ENCODE measurements at regions of chr11 and their contacts with region 1.

Region 1: DNA sequence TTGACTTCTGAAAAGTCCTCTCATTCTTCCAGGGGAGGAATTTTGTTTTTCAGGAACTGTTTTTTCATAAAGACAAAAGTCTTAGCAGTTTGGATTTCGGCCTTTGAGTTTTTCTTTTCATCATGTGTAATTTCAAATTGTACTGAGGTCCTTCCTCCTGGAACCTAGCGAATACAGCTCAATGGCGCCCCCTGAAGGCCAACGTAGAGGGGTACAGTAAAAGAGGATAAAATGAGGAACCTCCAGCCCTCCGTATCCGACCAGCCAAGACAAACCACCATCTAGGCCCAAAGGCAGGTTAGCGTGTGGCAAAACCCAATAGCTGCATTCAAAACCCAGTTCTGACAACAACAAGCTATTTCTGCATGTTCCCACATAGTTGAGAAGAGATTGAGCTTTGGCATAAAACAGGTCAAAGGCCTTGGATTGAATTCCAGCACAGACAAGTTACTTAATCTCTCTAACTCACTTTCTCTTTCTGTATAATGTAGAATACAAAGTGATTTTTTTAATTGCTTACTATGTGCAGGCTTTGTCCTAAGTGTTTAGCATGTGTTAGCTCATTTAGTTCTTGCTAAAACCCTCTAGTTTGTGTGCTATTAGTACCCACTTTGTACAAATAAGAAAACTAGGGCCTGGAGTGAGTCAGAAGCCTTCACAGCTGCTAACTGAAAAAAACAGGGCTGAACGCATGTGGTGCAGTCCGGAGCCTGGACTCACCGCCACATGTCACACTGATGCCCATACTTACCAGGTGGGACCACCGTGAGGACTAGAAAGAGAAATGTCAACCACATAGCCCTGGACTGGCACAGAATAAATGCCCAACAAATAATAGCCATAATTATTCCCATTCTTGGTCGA is 43.2 kb upstream of the ETS1 start:
- DNase-seq: peak; percentile 84 to 88 (median 86)
- H3K4me3 ChIP-seq: no peak overlapping the region
- H3K4me3 Mint-ChIP-seq: peak overlapping the region in 7 of 8 donors; percentile 45 to 88 (median 75)
- H3K27ac ChIP-seq: peak overlapping the region; percentile 49
- H3K27ac Mint-ChIP-seq: peak overlapping the region; percentile 92 to 97 (median 93)
- H3K4me1 ChIP-seq: peaks cover 64% of the 10 kb centered on the region
- H3K4me1 Mint-ChIP-seq: peaks cover 49 to 68% (median 59%) of the 10 kb centered on the region in 4 donors
- H3K27me3 ChIP-seq: no peaks in the 10 kb centered on the region
- H3K27me3 Mint-ChIP-seq: no peaks in the 10 kb centered on the region

Region 2: GRCh38 chr11:128180446-128181087 is 450.0 kb before region 1 on chr11:
- CTCF ChIA-PET with region 1: interaction called, 252 read pairs
- POLR2A ChIA-PET with region 1: no interaction called
- intact Hi-C with region 1: no loop called
- DNase-seq: no peak
- H3K4me3 ChIP-seq: no peak overlapping the region
- H3K4me3 Mint-ChIP-seq: no peak overlapping the region
- H3K27ac ChIP-seq: no peak overlapping the region
- H3K27ac Mint-ChIP-seq: no peak overlapping the region
- H3K4me1 ChIP-seq: no peaks in the 10 kb centered on the region
- H3K4me1 Mint-ChIP-seq: peaks cover 0 to 4% (median 0%) of the 10 kb centered on the region in 4 donors
- H3K27me3 ChIP-seq: no peaks in the 10 kb centered on the region
- H3K27me3 Mint-ChIP-seq: peaks cover 0 to 3% of the 10 kb centered on the region in 2 donors

Region 3: GRCh38 chr11:128323381-128323780 is 307.2 kb before region 1 on chr11:
- CTCF ChIA-PET with region 1: interaction called, 88 read pairs
- POLR2A ChIA-PET with region 1: interaction called, 35 read pairs
- intact Hi-C with region 1: loop called (anchors 1 kb)
- DNase-seq: peak; percentile 60 to 70 (median 68)
- H3K4me3 ChIP-seq: peak overlapping the region in 1 of 2 donors; percentile 17
- H3K4me3 Mint-ChIP-seq: peak overlapping the region in 7 of 8 donors; percentile 28 to 78 (median 63)
- H3K27ac ChIP-seq: peak overlapping the region; percentile 92
- H3K27ac Mint-ChIP-seq: peak overlapping the region; percentile 87 to 99 (median 97)
- H3K4me1 ChIP-seq: peaks cover 83% of the 10 kb centered on the region
- H3K4me1 Mint-ChIP-seq: peaks cover 65 to 92% (median 79%) of the 10 kb centered on the region in 4 donors
- H3K27me3 ChIP-seq: no peaks in the 10 kb centered on the region
- H3K27me3 Mint-ChIP-seq: no peaks in the 10 kb centered on the region

Region 4: DNA sequence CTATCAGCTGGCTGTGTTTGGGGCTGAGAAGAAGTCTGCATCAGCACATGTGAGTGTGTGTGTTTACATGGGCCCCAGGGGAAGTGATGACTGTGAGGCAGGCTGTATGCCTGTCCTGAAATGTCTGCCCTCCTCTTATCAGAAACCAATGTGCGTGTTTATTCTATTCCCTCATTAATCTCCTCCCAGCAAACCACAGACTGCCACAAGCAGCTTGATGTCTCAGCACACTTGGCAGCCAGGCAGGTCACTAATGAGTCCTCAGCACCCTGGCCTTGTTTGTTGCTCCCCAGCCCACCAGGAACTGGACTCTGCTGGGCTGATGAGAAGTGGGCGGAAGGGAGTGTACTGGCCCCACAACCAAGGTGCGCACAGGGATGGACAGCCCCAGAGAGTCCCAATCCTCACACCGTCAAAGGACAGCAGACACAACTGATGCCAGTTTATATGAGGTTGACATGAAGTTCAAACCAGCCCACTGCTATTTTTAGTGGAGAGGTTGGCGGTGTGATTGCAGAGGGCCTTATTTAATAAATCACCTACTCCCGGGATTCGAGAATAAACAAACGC is 269.1 kb before region 1 on chr11:
- CTCF ChIA-PET with region 1: no interaction called
- POLR2A ChIA-PET with region 1: no interaction called
- intact Hi-C with region 1: no loop called
- DNase-seq: peak in 3 of 5 donors; percentile 35 to 58 (median 35)
- H3K4me3 ChIP-seq: no peak overlapping the region
- H3K4me3 Mint-ChIP-seq: no peak overlapping the region
- H3K27ac ChIP-seq: no peak overlapping the region
- H3K27ac Mint-ChIP-seq: peak overlapping the region; percentile 34 to 90 (median 75)
- H3K4me1 ChIP-seq: peaks cover 13% of the 10 kb centered on the region
- H3K4me1 Mint-ChIP-seq: peaks cover 17 to 38% (median 26%) of the 10 kb centered on the region in 4 donors
- H3K27me3 ChIP-seq: no peaks in the 10 kb centered on the region
- H3K27me3 Mint-ChIP-seq: no peaks in the 10 kb centered on the region

Region 5: GRCh38 chr11:128497061-128497775 is 133.4 kb before region 1 on chr11:
- CTCF ChIA-PET with region 1: interaction called, 10 read pairs
- POLR2A ChIA-PET with region 1: interaction called, 949 read pairs
- intact Hi-C with region 1: no loop called
- DNase-seq: peak in 1 of 5 donors; percentile 65
- H3K4me3 ChIP-seq: peak overlapping the region; percentile 5 to 47
- H3K4me3 Mint-ChIP-seq: peak overlapping the region; percentile 78 to 97 (median 88)
- H3K27ac ChIP-seq: peak overlapping the region; percentile 89
- H3K27ac Mint-ChIP-seq: peak overlapping the region; percentile 82 to 99 (median 97)
- H3K4me1 ChIP-seq: peaks cover 99% of the 10 kb centered on the region
- H3K4me1 Mint-ChIP-seq: peaks cover 90 to 100% (median 95%) of the 10 kb centered on the region in 4 donors
- H3K27me3 ChIP-seq: no peaks in the 10 kb centered on the region
- H3K27me3 Mint-ChIP-seq: no peaks in the 10 kb centered on the region

Region 6: GRCh38 chr11:128603752-128604414 is 26.7 kb before region 1 on chr11:
- CTCF ChIA-PET with region 1: interaction called, 89 read pairs
- POLR2A ChIA-PET with region 1: interaction called, 130 read pairs
- intact Hi-C with region 1: no loop called
- DNase-seq: no peak
- H3K4me3 ChIP-seq: no peak overlapping the region
- H3K4me3 Mint-ChIP-seq: no peak overlapping the region
- H3K27ac ChIP-seq: no peak overlapping the region
- H3K27ac Mint-ChIP-seq: peak overlapping the region in 2 of 7 donors; percentile 34 to 56
- H3K4me1 ChIP-seq: peaks cover 28% of the 10 kb centered on the region
- H3K4me1 Mint-ChIP-seq: peaks cover 10 to 29% (median 18%) of the 10 kb centered on the region in 4 donors
- H3K27me3 ChIP-seq: no peaks in the 10 kb centered on the region
- H3K27me3 Mint-ChIP-seq: no peaks in the 10 kb centered on the region

Region 7: DNA sequence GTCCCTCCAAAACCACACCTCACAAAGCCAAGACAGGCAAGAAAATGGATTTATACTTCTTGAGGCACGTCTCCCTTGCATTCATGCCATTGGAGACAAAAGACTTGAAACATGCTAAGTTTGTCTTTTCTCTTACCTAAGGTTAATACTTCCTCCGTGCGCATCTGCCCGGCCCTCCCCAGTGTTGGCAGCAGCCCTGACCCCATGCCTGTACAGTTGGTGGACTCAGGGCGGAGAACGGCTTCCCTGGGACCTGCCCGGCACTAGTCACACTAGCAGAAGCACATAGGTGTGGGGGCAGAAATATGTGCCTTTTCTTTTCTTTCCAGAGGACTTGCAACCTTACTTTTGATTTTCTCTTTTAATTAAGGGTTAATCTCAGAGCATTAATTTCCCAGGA is 18.1 kb after region 1 on chr11:
- CTCF ChIA-PET with region 1: no interaction called
- POLR2A ChIA-PET with region 1: no interaction called
- intact Hi-C with region 1: no loop called
- DNase-seq: no peak
- H3K4me3 ChIP-seq: no peak overlapping the region
- H3K4me3 Mint-ChIP-seq: no peak overlapping the region
- H3K27ac ChIP-seq: no peak overlapping the region
- H3K27ac Mint-ChIP-seq: no peak overlapping the region
- H3K4me1 ChIP-seq: no peaks in the 10 kb centered on the region
- H3K4me1 Mint-ChIP-seq: peaks cover 0 to 4% (median 3%) of the 10 kb centered on the region in 4 donors
- H3K27me3 ChIP-seq: no peaks in the 10 kb centered on the region
- H3K27me3 Mint-ChIP-seq: no peaks in the 10 kb centered on the region

Region 8: DNA sequence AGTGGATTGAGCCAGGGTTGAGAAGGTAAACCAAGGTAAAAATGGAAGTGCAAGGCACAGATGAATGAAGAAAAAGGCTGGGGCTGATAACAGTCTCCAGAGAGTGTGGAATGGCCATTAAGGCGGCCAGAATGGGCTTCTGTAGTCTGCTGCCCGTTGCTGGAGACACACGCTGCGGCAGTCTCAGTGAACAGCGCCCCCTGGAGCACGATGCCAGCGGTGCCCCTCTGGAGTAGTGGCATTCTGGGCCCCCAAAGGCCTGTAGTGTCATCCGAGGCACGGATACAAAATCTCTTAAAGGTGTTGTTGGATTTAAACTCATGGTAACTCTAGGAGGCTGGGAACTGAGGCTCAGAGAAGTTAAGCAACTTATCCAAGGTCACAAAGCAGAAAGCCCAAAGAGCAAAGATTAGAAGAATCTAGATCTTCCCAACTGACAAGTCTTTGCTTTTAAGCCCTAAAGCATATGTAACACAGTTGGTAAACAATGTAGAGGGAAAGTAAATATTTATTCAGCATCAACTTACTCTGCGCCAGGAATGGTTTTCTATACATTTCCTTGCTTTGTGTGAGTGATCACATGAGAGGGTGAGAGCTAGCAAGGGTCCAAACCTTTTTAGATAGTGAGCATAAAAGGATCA is 218.3 kb after region 1 on chr11:
- CTCF ChIA-PET with region 1: interaction called, 10 read pairs
- POLR2A ChIA-PET with region 1: no interaction called
- intact Hi-C with region 1: loop called (anchors 5 kb)
- DNase-seq: peak in 4 of 5 donors; percentile 46 to 62 (median 56)
- H3K4me3 ChIP-seq: no peak overlapping the region
- H3K4me3 Mint-ChIP-seq: peak overlapping the region in 1 of 8 donors; percentile 27
- H3K27ac ChIP-seq: no peak overlapping the region
- H3K27ac Mint-ChIP-seq: peak overlapping the region in 5 of 7 donors; percentile 3 to 78 (median 46)
- H3K4me1 ChIP-seq: peaks cover 35% of the 10 kb centered on the region
- H3K4me1 Mint-ChIP-seq: peaks cover 23 to 42% (median 37%) of the 10 kb centered on the region in 4 donors
- H3K27me3 ChIP-seq: no peaks in the 10 kb centered on the region
- H3K27me3 Mint-ChIP-seq: no peaks in the 10 kb centered on the region